Endothelial cell of umbilical vein (primary cell): ENCODE measurements at regions of chr2 and their contacts with region 1.

Region 1: DNA sequence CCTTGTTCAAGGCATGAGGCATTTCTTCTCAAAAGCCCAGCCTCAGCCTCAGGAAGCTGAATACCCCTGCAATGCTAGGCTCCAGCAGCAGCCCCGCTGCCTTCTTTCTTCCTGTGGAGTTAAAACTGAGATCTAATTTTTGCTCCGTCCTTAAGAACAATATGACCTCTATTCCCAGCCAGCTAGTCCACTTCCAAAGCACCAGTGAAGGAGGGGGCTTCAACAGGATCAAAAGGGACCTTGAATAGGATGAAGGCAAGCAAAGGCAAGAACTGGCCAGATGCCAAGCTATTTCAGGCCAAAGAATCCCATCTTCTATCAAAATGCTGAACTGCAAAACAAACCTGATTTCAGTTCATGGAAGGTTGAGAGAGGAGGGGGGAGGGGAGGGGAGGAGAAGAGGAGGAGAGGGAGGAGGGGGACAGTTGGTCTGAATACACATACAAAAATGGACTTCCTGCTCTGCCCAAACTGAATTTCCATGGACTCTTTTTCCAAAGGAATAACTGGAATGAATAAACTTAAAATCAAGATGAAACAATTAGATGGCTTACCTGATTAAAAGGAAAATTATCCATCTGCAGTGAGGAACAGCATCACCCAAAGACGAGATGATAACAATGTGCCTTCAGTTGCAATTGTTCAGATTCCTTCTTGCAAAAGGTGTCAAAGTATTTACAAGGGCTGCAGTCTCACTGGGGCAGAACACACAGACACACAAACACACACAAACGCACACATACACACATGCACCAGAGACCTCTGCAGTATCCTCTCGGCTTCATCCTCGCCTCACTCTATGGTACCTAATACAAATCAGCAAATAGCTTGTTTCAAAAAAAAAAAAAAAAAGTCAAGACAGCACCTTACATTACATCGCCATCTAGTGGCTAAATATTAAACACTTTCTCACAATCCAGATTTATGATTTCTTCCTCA is at the start of gene SCN1A:
- DNase-seq: peak; percentile 64
- H3K4me3 ChIP-seq: no peak within 1 kb of the TSS
- H3K27ac ChIP-seq: no peak within 1 kb of the TSS
- H3K4me1 ChIP-seq: no peaks in the 10 kb centered on the region
- H3K27me3 ChIP-seq: peaks cover 8 to 17% of the 10 kb centered on the region in 2 experiments
- CTCF ChIP-seq: peak; percentile 41 to 50
- POLR2A ChIP-seq: no peak
- total RNA-seq, gene SCN1A: not detected in 2 replicates

Region 2: DNA sequence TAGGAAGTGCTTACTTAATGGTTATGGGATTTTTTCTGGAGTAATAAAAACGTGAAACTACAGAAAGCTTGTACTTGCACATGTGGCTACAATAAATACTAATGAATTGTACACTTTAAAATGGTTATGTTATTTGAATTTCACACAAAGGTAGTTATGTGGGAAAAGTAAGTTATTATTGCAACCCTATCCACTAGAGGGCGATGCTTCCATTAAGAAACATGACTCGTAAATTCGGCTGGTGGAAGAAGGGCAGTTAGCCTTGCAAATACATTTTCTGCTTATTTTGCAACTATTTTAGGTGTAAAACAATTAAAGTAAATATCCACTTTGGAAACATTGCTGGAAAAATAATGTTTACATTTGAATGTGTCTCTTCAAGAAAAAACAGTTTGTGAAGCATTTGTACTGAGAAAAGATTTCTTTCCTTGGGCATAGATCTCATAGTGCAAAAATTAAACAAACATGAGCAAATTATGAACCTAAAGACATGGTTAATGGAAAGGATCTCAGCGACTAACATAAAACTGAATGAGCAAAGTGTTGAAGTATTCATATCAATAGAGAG is 726.1 kb before region 1 on chr2:
- CTCF ChIA-PET with region 1: interaction called, 8 read pairs
- POLR2A ChIA-PET with region 1: no interaction called
- dilution Hi-C with region 1: no loop called
- intact Hi-C with region 1: loop called (anchors 2 kb)
- DNase-seq: peak; percentile 77
- H3K4me3 ChIP-seq: no peak overlapping the region
- H3K27ac ChIP-seq: no peak overlapping the region
- H3K4me1 ChIP-seq: no peaks in the 10 kb centered on the region
- H3K27me3 ChIP-seq: peaks cover 22 to 30% of the 10 kb centered on the region in 2 experiments
- CTCF ChIP-seq: peak; percentile 43 to 46
- POLR2A ChIP-seq: no peak

Region 3: GRCh38 chr2:165953655-165954606 is 173.6 kb before region 1 on chr2 and contains the start of gene TTC21B:
- CTCF ChIA-PET with region 1: interaction called, 193 read pairs
- POLR2A ChIA-PET with region 1: interaction called, 14 read pairs
- dilution Hi-C with region 1: no loop called
- intact Hi-C with region 1: loop called (anchors 1 kb)
- DNase-seq: peak; percentile 97
- H3K4me3 ChIP-seq: peak within 1 kb of the TSS; percentile 60 to 99 (median 93)
- H3K27ac ChIP-seq: peak within 1 kb of the TSS; percentile 81
- H3K4me1 ChIP-seq: peaks cover 17% of the 10 kb centered on the region
- H3K27me3 ChIP-seq: no peaks in the 10 kb centered on the region
- CTCF ChIP-seq: peak; percentile 76 to 78
- POLR2A ChIP-seq: peak; percentile 75
- total RNA-seq, gene TTC21B: 18.0 and 21.9 TPM in 2 replicates

Region 4: GRCh38 chr2:165989851-165990250 is 137.6 kb before region 1 on chr2:
- CTCF ChIA-PET with region 1: interaction called, 10 read pairs
- POLR2A ChIA-PET with region 1: no interaction called
- dilution Hi-C with region 1: no loop called
- intact Hi-C with region 1: no loop called
- DNase-seq: no peak
- H3K4me3 ChIP-seq: no peak overlapping the region
- H3K27ac ChIP-seq: no peak overlapping the region
- H3K4me1 ChIP-seq: no peaks in the 10 kb centered on the region
- H3K27me3 ChIP-seq: no peaks in the 10 kb centered on the region
- CTCF ChIP-seq: no peak
- POLR2A ChIP-seq: no peak

Region 5: DNA sequence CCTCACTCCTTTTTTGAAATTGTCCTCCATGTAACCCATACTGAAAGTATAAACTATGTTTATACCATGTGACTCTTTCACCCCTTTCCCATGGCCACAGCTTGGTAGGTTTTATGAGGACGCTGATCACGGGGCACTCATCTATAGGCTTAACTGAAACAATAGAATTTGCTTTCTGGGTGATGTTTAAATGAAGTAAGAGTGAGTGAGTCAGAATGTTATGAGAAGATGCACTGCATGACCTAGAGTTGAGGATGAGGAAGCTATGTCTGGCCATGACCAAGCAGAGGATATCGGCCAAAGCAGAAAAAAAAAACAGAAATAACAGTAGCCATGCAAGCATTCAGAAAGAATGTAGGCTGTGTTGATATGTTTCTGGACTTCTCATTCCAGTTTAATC is 34.6 kb before region 1 on chr2:
- CTCF ChIA-PET with region 1: interaction called, 12 read pairs
- POLR2A ChIA-PET with region 1: no interaction called
- dilution Hi-C with region 1: no loop called
- intact Hi-C with region 1: no loop called
- DNase-seq: peak; percentile 95
- H3K4me3 ChIP-seq: no peak overlapping the region
- H3K27ac ChIP-seq: peak overlapping the region; percentile 80
- H3K4me1 ChIP-seq: peaks cover 15% of the 10 kb centered on the region
- H3K27me3 ChIP-seq: no peaks in the 10 kb centered on the region
- CTCF ChIP-seq: no peak
- POLR2A ChIP-seq: no peak

Region 6: GRCh38 chr2:166140932-166141331 is 13.4 kb after region 1 on chr2:
- CTCF ChIA-PET with region 1: interaction called, 16 read pairs
- POLR2A ChIA-PET with region 1: no interaction called
- dilution Hi-C with region 1: no loop called
- intact Hi-C with region 1: no loop called
- DNase-seq: no peak
- H3K4me3 ChIP-seq: no peak overlapping the region
- H3K27ac ChIP-seq: no peak overlapping the region
- H3K4me1 ChIP-seq: no peaks in the 10 kb centered on the region
- H3K27me3 ChIP-seq: peaks cover 0 to 3% of the 10 kb centered on the region in 2 experiments
- CTCF ChIP-seq: no peak
- POLR2A ChIP-seq: no peak

Region 7: GRCh38 chr2:166765141-166765540 is 637.7 kb after region 1 on chr2:
- CTCF ChIA-PET with region 1: no interaction called
- POLR2A ChIA-PET with region 1: no interaction called
- dilution Hi-C with region 1: no loop called
- intact Hi-C with region 1: no loop called
- DNase-seq: no peak
- H3K4me3 ChIP-seq: no peak overlapping the region
- H3K27ac ChIP-seq: no peak overlapping the region
- H3K4me1 ChIP-seq: no peaks in the 10 kb centered on the region
- H3K27me3 ChIP-seq: no peaks in the 10 kb centered on the region
- CTCF ChIP-seq: no peak
- POLR2A ChIP-seq: no peak